Calu3 (cell line): ENCODE measurements at regions of chr6 and their contacts with region 1.

Region 1: GRCh38 chr6:22828179-22829062 is 259.1 kb downstream of the HDGFL1 start:
- DNase-seq: peak; percentile 88
- H3K4me3 Mint-ChIP-seq: peak overlapping the region; percentile 48
- H3K27ac Mint-ChIP-seq: peak overlapping the region; percentile 82
- H3K4me1 Mint-ChIP-seq: peaks cover 68% of the 10 kb centered on the region
- H3K27me3 Mint-ChIP-seq: no peaks in the 10 kb centered on the region
- CTCF ChIP-seq: peak; percentile 95

Region 2: DNA sequence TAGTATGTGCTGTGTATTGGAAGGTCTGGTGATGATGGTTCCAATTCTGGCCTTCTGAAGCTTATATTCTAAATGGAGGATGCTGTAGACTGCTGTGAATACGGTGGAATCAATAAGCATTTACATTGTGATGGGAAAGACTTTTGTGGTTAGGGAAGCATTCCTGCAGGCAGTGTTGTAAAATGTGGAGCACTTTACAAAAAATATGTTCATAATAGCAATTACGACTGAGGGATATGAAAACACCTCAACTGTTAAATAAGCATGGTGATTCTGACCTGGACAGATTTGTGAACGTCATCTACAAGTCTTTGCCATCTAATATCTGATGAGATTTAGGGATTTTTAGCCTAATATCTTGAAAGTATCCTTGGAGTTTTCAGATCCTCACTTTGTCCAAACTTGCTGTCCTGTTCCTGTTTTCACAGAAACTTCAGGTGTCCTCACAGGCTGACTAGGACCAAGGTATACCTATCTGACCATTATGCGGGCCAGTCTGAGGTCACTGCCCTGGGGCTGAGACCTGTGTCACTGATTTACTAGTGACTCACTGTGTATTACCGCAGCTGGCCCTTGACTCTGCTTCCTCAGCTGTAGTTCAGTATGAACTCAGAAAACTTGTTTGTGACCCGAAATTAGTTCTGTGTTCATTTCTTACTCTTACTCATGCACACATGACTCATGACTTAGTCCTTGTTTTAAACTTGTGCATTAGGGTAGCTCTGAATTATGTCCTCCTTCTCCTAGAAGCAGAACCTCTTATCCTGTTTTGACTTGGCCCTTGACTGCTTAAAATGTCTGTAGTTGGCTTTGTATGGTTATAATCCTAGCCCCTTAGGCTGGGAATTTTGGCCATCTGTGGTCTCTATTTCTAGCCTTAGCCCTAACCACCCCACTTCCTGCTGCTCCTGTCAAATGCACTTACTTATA is 1951.1 kb before region 1 on chr6:
- CTCF ChIA-PET with region 1: no interaction called
- intact Hi-C with region 1: loop called (anchors 2 kb)
- DNase-seq: peak; percentile 95
- H3K4me3 Mint-ChIP-seq: peak overlapping the region; percentile 45
- H3K27ac Mint-ChIP-seq: peak overlapping the region; percentile 96
- H3K4me1 Mint-ChIP-seq: peaks cover 93% of the 10 kb centered on the region
- H3K27me3 Mint-ChIP-seq: no peaks in the 10 kb centered on the region
- CTCF ChIP-seq: no peak

Region 3: DNA sequence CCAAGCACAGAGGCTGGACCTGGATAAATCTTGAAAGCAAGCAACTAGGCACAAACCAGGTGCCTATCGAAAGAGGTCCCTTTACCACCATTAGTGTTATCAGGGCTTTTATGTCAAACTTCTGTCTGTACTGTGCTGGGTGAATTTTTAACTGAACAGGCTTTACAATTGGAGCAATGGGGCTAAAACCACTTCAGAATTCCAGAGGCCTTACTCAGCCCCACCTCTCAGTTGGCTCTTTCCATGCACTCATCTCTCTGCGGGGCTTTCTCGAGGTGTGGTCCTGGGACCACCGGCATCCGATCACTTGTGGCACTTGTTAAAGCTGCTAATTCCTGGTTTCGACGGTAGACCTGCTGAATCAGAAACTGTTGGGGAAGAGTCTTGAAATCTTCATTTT is 1002.4 kb before region 1 on chr6:
- CTCF ChIA-PET with region 1: no interaction called
- intact Hi-C with region 1: loop called (anchors 10 kb)
- DNase-seq: peak; percentile 62
- H3K4me3 Mint-ChIP-seq: peak overlapping the region; percentile 44
- H3K27ac Mint-ChIP-seq: peak overlapping the region; percentile 74
- H3K4me1 Mint-ChIP-seq: peaks cover 47% of the 10 kb centered on the region
- H3K27me3 Mint-ChIP-seq: no peaks in the 10 kb centered on the region
- CTCF ChIP-seq: no peak

Region 4: GRCh38 chr6:22036275-22036674 is 792.1 kb before region 1 on chr6:
- CTCF ChIA-PET with region 1: no interaction called
- intact Hi-C with region 1: loop called (anchors 1 kb)
- DNase-seq: peak; percentile 92
- H3K4me3 Mint-ChIP-seq: peak overlapping the region; percentile 43
- H3K27ac Mint-ChIP-seq: peak overlapping the region; percentile 97
- H3K4me1 Mint-ChIP-seq: peaks cover 35% of the 10 kb centered on the region
- H3K27me3 Mint-ChIP-seq: no peaks in the 10 kb centered on the region
- CTCF ChIP-seq: no peak

Region 5: DNA sequence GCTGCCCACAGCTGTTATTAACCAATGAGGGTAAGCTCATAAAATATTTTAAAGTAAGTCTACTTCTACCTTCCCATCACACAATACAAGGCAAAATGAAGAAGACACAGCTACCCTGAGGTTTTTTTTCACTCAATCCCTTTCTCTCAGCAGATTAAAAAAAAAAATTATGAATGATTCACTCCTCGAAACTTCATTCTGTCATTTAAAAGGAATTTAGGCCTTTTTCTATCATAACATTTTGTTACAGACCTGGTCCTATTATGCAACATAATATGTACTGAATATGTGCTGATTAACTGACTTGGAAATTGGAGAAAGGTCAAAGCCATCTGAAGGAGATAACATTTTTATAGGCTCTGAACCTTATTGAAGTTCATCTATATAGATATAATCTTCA is 577.1 kb before region 1 on chr6:
- CTCF ChIA-PET with region 1: no interaction called
- intact Hi-C with region 1: loop called (anchors 5 kb)
- DNase-seq: no peak
- H3K4me3 Mint-ChIP-seq: no peak overlapping the region
- H3K27ac Mint-ChIP-seq: peak overlapping the region; percentile 46
- H3K4me1 Mint-ChIP-seq: peaks cover 47% of the 10 kb centered on the region
- H3K27me3 Mint-ChIP-seq: no peaks in the 10 kb centered on the region
- CTCF ChIP-seq: no peak

Region 6: DNA sequence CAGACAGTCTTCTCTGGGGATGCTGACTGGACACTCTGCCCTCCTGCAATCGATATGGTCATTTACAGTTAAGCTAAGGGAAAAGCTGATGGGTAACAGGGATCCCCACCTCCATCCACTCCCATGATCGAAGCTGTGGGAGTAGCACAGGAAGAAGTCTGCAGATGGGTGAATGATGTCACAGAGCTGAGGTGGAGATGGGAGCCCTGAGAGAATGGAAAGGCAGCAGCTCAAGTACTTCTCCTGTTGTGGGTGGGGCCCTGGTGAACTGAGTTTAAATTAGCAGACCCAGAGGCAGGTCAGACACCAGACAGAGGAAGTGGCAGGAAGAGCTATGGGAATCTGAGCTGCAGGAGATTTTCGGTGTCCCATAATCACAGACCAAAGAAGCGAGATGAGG is 230.1 kb before region 1 on chr6:
- CTCF ChIA-PET with region 1: no interaction called
- intact Hi-C with region 1: loop called (anchors 10 kb)
- DNase-seq: no peak
- H3K4me3 Mint-ChIP-seq: no peak overlapping the region
- H3K27ac Mint-ChIP-seq: no peak overlapping the region
- H3K4me1 Mint-ChIP-seq: peaks cover 22% of the 10 kb centered on the region
- H3K27me3 Mint-ChIP-seq: no peaks in the 10 kb centered on the region
- CTCF ChIP-seq: no peak

Region 7: DNA sequence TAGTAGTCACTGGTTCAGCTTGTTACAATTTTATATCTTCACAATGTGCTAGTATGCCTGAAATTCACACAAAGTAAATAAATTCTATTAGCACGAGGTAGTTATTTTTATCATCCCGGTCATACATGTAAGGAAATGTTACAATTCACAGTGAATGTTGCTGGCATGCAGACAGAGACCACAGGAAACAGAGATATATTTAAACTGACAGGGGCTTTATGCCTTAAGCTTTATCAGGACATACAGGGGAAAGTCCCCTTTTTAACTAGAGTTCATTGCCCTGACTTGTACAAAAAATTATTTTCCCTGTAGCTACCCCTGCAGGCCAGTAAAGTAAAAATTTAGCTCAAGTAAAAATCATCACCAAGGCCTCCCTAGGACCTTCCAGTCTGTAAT is 585.6 kb after region 1 on chr6:
- CTCF ChIA-PET with region 1: interaction called, 5 read pairs
- intact Hi-C with region 1: loop called (anchors 10 kb)
- DNase-seq: peak; percentile 10
- H3K4me3 Mint-ChIP-seq: no peak overlapping the region
- H3K27ac Mint-ChIP-seq: no peak overlapping the region
- H3K4me1 Mint-ChIP-seq: no peaks in the 10 kb centered on the region
- H3K27me3 Mint-ChIP-seq: no peaks in the 10 kb centered on the region
- CTCF ChIP-seq: no peak